WTC11 (cell line): ENCODE measurements at regions of chr1 and their contacts with region 1.

Region 1: DNA sequence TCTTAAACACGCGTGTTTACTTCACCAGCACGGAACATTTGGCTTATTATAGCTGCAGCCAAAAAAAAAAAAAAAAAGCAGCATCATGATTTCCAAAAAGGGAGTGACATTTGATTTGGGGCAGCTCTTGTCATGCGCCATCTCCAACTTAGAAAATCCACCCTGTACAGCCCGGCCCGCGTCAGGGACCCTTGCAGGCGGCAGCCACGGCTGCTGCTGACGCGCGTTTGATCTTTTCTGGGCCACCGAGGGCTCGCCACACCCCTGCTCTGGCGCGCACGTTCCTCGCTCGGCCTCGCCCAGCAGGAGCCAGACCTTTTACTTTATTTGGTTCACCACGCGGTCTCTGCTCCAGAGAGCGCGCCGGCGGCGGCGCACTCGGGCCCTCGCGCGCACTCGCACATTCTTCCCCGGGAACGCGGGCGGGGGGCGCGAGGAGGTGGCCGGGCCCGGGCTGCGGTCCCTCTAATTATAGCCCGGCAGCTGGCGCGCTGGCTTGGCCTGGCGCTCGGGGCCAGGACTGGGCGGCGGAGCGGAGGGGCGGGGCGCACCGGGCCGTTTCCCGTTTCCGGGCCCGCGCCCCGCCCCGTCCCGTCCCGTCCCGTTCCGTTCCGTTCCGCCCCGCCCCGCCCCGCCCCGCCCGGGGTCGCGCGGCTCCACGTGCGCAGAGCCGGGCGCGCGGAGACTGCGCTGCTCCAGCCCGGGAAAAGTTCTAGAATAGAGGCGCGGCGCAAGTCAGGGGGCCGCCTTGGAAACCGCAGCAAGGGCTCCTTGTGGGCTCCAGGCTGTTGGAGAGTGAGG is 10.2 kb downstream of the IRF2BP2 start:
- DNase-seq: peak; percentile 85
- ATAC-seq: peak; percentile 89
- H3K4me3 Mint-ChIP-seq: peak overlapping the region; percentile 76
- H3K27ac Mint-ChIP-seq: peak overlapping the region; percentile 84
- H3K4me1 Mint-ChIP-seq: peaks cover 58% of the 10 kb centered on the region
- H3K27me3 Mint-ChIP-seq: no peaks in the 10 kb centered on the region; the same call in 1 of the 2 replicates
- CTCF ChIP-seq: no peak

Region 2: GRCh38 chr1:234515821-234516241 is 84.0 kb before region 1 on chr1:
- CTCF ChIA-PET with region 1: no interaction called
- POLR2A ChIA-PET with region 1: no interaction called
- DNase-seq: no peak
- ATAC-seq: no peak
- H3K4me3 Mint-ChIP-seq: no peak overlapping the region
- H3K27ac Mint-ChIP-seq: peak overlapping the region; percentile 98
- H3K4me1 Mint-ChIP-seq: peaks cover 32% of the 10 kb centered on the region
- H3K27me3 Mint-ChIP-seq: no peaks in the 10 kb centered on the region
- CTCF ChIP-seq: no peak

Region 3: DNA sequence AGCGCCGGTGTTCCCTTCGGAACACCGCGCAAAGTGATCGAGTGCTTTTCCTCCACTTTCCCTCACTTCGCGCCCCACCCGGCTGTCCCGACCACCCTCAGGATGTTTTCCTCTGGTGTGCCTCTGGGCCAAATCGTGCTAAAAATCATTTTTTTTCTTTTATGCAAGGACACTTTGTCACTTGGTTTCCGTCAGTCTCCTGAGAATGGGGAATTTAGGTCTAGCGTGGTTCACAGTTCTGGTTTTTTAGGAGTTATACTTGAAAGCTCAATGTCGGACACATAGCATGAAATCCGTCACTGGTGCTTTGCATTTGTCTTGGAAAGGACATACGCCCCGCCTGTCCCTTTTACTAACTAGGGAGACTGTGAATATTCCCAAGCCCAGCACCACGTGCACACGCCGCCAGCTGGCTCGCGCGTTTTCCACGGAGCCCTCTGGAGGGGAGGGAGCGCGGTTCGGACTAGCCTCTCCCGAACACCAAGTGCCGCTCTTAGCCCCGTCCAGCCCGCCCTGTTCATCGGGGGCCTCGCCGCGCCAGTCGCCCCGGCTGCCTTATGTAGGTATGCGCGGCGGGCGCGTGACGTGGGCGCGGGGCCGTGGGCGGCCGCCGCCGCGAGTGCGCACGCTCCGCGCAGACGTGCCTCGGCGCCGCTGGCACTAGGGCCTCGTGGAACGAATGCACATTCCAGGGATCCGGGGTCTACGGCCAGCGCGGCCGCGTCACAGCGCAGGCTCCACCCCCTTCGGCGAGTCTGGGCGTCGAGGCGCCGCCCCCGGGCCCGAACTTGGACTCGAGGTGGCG is 10.7 kb after region 1 on chr1:
- CTCF ChIA-PET with region 1: interaction called, 9 read pairs
- POLR2A ChIA-PET with region 1: interaction called, 30 read pairs
- DNase-seq: peak; percentile 87
- ATAC-seq: peak; percentile 65
- H3K4me3 Mint-ChIP-seq: peak overlapping the region; percentile 85
- H3K27ac Mint-ChIP-seq: peak overlapping the region; percentile 99
- H3K4me1 Mint-ChIP-seq: peaks cover 56% of the 10 kb centered on the region
- H3K27me3 Mint-ChIP-seq: no peaks in the 10 kb centered on the region
- CTCF ChIP-seq: no peak

Region 4: GRCh38 chr1:235077571-235078479 is 478.0 kb after region 1 on chr1:
- CTCF ChIA-PET with region 1: interaction called, 16 read pairs
- POLR2A ChIA-PET with region 1: no interaction called
- DNase-seq: no peak
- ATAC-seq: no peak
- H3K4me3 Mint-ChIP-seq: no peak overlapping the region
- H3K27ac Mint-ChIP-seq: no peak overlapping the region
- H3K4me1 Mint-ChIP-seq: peaks cover 12% of the 10 kb centered on the region
- H3K27me3 Mint-ChIP-seq: no peaks in the 10 kb centered on the region
- CTCF ChIP-seq: no peak

Region 5: DNA sequence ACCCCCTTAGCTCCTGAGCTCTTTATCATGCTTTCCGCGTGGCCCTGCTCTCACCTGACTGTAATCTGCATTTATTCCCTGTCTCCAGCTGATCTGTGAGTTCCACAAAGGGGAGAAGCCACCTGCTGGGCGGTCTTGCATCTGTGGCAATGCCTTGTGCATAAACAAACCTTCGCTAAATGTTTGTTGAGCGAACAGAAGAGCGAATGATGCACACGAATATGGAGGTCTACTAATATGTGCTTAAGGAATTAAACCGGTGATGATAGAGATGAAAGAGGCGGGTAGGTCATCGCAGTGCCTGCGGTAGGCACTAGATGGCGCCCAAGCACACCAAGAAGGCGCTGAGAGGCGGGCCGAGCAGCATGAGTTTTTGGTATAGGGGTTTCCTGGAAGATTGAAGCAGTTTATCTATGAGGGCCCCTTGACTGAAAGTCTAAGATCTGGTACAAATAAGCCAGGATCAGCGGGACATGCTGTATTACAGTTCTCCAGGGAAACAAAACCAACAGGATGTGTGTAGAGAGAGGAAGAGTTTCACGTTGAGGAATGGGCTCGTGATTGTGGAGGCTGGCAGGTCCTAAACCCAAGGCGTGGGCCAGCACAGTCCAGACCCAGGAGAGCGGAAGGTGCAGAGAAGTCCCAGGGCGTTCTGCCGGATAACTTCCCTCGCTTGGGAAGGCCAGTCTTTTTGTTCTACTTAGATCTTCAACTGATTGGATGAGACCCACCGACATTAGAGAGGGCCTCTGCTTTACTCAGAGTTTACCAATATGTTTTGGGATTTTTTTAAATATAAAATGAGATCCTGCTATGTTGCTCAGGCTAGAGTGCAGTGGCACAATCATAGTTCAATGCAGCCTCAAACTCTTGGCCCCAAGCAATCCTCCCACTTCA is 494.1 kb after region 1 on chr1:
- CTCF ChIA-PET with region 1: interaction called, 12 read pairs
- POLR2A ChIA-PET with region 1: no interaction called
- DNase-seq: peak; percentile 87
- ATAC-seq: peak; percentile 64
- H3K4me3 Mint-ChIP-seq: peak overlapping the region; percentile 67
- H3K27ac Mint-ChIP-seq: peak overlapping the region; percentile 14; the same call in 1 of the 2 replicates
- H3K4me1 Mint-ChIP-seq: peaks cover 36% of the 10 kb centered on the region
- H3K27me3 Mint-ChIP-seq: no peaks in the 10 kb centered on the region; the same call in 1 of the 2 replicates
- CTCF ChIP-seq: peak; percentile 91